ENCODE measurements at regions of chr19 and their contacts with region 1.

Region 1: DNA sequence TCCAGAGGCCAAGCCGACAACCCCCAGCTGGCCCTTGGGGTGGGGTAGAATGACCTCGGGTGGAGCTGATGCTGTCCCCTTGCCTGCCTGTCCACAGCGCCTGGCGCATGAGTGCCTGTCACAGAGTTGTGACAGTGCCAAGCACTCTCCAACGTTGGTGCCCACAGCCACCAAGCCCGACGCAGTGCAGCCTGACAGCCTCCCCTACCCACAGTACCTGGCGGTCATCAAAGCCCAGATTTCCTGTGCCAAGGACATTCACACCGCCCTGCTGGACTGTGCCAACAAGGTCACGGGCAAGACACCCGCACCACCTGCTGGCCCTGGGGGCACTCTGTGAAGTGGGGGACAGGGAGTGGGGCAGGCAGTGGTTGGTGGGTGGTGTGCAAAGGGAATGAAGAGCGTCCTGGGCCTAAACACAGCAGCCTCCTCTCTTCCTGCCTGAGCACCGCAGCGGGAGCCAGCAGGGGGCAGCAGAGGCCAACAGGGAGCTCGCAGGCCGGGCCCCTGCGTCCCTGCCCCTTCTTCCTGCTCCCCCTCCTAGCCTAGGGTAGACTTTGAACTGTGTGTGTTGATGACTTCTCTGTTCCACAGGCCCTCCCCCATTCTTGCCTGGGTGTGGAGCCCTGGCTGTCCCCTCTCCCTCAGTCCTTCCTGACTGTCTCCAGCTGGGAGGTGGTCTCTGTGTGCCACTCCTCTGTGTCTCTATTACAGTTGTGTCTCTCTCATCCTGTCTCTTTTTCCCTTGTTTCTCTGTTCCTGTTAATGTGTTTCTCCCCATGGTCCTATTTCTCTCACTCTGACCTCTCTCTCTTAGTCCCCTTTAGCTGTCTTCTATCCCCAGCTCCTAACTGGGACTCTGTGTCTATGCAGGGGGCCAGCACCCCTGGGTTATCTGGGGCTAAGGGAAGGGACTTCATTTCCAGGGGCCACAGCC is 6.5 kb downstream of the MED29 start:
- DNase-seq: peak; percentile 98 to 99
- ATAC-seq: peak; percentile 52 to 84
- H3K4me3 ChIP-seq: peak overlapping the region; percentile 22; the same call in 2 of the 3 replicates
- H3K27ac ChIP-seq: peak overlapping the region; percentile 92 to 99
- H3K4me1 ChIP-seq: peaks cover 56% of the 10 kb centered on the region
- CTCF ChIP-seq: peak; percentile 100
- EP300 ChIP-seq: no peak; a peak in 1 of 5 replicates
- POLR2A ChIP-seq: peak; percentile 47; the same call in 1 of the 2 replicates
- RAD21 ChIP-seq: peak; percentile 100

Region 2: DNA sequence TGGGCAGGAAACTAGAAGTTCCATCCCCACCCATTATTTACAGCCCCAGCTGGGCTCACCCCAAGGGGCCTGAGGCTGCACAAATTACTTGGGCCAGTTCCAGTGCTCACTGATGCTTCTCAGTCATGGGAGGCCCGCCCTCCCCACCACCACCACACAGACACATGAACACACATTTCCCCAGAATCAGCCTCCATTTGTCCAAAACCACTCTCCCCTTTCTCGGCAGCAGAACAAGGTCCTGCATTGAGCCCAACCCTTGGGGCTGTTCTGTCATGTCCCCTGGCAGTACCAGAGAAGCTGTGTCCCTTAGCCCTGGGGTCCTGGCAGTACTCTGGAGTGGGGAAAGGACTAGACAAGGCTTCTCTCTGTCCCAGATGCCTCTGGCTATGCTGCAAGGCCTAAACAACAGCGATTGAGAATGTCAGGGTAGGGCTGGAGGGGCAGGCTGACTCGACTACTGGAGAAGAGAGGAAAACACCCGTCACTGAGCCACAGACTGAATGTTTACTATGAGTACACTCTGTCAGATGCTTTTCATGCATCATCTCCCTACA is 33.6 kb before region 1 on chr19:
- CTCF ChIA-PET with region 1: interaction called, 19 read pairs
- POLR2A ChIA-PET with region 1: interaction called, 3 read pairs
- DNase-seq: no peak
- ATAC-seq: no peak; a peak in 2 of 6 replicates
- H3K4me3 ChIP-seq: no peak overlapping the region
- H3K27ac ChIP-seq: no peak overlapping the region
- H3K4me1 ChIP-seq: no peaks in the 10 kb centered on the region
- CTCF ChIP-seq: no peak
- EP300 ChIP-seq: no peak
- POLR2A ChIP-seq: no peak
- RAD21 ChIP-seq: no peak

Region 3: DNA sequence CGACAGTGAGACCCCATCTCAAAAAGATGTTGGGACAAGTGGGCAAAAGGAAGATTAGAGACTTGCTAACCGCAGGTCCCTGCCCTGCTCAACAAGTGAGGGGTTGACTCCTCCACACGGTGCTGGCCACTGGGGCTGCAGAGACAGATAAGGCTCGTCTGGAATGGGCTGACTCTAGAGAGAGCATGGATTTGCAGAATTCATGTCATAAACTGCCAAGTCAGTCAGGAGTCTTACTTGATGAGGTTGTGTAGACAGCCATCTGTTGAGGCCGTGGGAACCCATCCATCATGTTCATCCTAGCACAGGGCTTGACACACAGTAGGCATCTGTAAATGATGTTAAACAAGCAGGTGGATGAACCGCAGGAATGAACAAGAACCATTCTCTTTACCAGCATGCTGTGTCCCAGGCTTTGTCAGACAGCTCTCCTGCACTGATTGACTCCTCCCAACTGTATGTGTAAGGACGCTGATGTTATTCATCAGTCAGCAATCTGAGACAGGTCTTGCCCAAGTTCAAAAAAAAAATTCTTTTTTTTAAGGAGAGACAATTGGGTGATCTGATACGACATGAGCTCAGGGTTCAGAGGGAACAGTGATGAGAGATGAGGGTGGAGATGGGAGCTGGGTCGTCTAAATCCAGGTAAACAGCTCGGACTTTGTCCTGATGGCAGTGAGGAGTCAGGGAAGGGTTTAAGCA is 15.6 kb before region 1 on chr19:
- CTCF ChIA-PET with region 1: interaction called, 50 read pairs
- POLR2A ChIA-PET with region 1: interaction called, 4 read pairs
- DNase-seq: no peak
- ATAC-seq: peak; percentile 28 to 35; a peak in 4 of 6 replicates
- H3K4me3 ChIP-seq: no peak overlapping the region
- H3K27ac ChIP-seq: no peak overlapping the region
- H3K4me1 ChIP-seq: no peaks in the 10 kb centered on the region
- CTCF ChIP-seq: no peak
- EP300 ChIP-seq: no peak
- POLR2A ChIP-seq: no peak
- RAD21 ChIP-seq: no peak

Region 4: DNA sequence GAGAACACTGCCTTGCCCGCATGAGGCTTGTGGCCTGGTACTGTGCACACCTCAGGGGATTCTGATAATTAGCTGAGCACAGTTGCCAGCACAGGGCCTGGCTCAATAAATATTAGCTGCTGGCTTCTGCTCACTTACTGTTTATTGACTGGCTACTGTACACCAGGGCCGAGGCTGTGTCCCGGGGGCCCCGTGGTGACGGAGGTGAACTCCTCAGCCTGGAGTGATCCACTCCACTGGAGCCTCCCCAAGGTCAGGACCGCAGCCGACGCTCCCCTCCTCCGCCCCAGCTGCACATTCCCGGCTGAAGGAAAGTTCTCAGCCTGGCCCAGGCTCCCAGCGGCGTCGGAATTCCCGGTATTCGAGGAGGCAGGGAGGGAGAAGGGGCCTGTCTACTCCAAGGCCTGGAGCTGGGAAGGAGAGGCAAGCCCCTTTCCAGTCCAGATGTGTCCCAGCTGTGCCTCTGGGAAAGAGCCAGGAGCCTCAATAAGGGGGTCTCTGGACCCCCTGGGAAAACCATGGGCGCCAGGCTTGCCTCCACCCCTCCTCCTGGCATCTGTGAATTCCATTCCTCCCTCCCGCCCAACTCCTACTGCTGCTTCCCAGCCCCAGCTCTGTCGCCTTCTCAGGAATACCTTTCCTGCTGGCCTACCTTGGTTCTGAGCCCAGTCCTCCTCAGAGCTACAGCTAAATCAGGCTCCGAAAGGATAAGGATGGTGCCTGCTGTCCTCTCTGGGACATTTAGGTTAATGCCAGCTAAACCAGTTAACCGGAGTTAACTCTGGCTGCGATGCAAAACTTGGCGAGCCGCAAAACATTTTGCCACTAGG is 30.9 kb after region 1 on chr19:
- CTCF ChIA-PET with region 1: interaction called, 457 read pairs
- POLR2A ChIA-PET with region 1: interaction called, 140 read pairs
- DNase-seq: peak; percentile 81 to 94
- ATAC-seq: peak; percentile 52 to 69
- H3K4me3 ChIP-seq: no peak overlapping the region
- H3K27ac ChIP-seq: peak overlapping the region; percentile 83 to 90
- H3K4me1 ChIP-seq: peaks cover 62% of the 10 kb centered on the region
- CTCF ChIP-seq: no peak
- EP300 ChIP-seq: no peak
- POLR2A ChIP-seq: no peak
- RAD21 ChIP-seq: no peak

Region 5: GRCh38 chr19:39474139-39474622 is 76.6 kb after region 1 on chr19:
- CTCF ChIA-PET with region 1: interaction called, 18 read pairs
- POLR2A ChIA-PET with region 1: no interaction called
- DNase-seq: peak; percentile 64 to 89
- ATAC-seq: peak; percentile 58 to 87; a peak in 5 of 6 replicates
- H3K4me3 ChIP-seq: no peak overlapping the region
- H3K27ac ChIP-seq: no peak overlapping the region
- H3K4me1 ChIP-seq: peaks cover 13% of the 10 kb centered on the region
- CTCF ChIP-seq: peak; percentile 97
- EP300 ChIP-seq: no peak
- POLR2A ChIP-seq: no peak
- RAD21 ChIP-seq: peak; percentile 61 to 69; a peak in 4 of 5 replicates

Region 6: DNA sequence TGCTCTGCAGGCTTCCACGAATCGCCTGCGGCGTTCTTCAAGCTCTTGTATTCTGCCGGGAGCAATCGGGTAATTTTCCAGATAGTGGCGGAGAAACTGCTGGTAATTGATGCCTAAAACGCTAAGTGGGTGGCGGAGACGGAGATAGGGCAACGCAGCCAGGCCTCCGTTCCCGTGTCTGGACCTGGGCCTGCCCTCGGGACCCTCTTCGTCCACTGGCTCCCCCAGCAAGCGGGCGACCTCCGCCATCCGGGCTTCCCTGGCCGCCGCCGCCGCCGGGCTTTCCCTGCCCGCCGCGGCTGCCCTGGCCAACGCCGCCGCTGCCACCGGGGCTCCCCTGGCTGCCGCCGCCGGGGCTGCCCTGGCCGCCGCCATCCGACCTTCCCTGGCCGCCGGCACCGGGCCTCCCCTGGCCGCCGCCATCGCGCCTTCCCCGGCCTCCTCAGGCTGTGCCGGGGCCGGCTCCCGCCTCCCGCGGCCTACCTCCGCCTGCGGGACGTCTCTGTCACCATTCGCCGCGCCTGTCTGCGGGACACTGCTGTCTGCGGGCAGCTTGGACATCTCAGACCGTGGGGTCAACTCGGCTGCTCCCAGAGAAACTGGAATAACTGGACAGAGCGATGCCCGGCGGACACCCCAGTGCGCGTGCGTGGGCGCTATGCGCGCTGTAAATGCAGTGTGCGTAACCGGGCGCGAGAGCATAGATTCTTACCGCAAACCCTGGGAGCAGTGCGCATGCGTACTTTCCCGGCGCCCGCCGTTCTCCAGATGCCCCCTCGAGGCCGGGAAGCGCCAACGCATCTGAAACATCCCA is 142.1 kb after region 1 on chr19 and contains the start of gene EID2:
- CTCF ChIA-PET with region 1: interaction called, 16 read pairs
- POLR2A ChIA-PET with region 1: no interaction called
- DNase-seq: peak; percentile 99
- ATAC-seq: peak; percentile 93 to 98
- H3K4me3 ChIP-seq: peak within 1 kb of the TSS; percentile 68
- H3K27ac ChIP-seq: peak within 1 kb of the TSS; percentile 88 to 89
- H3K4me1 ChIP-seq: peaks cover 15% of the 10 kb centered on the region
- CTCF ChIP-seq: peak; percentile 90
- EP300 ChIP-seq: no peak
- POLR2A ChIP-seq: peak; percentile 98
- RAD21 ChIP-seq: peak; percentile 71 to 72
- polyA plus RNA-seq, gene EID2: 23.2 and 26.1 TPM in 2 replicates

Measured in A549 (cell line).